Activated T-helper 1 cell treated with anti-CD3 and anti-CD28 coated beads, Interleukin-12 subunit alpha, Interleukin-12 subunit beta, Interleukin-2, Interleukin-4 antibody, amounts not matched to agents 30 ng/mL and 10 ng/mL and 1 ng/mL, durations not matched to agents 14 hours and 24 hours and 36 hours (primary cell): ENCODE measurements at regions of chr11 and their contacts with region 1.

Region 1: GRCh38 chr11:2400069-2400760 is at the start of gene TSSC4:
- DNase-seq: peak; percentile 99
- H3K4me3 Mint-ChIP-seq: peak within 1 kb of the TSS; percentile 92
- H3K27ac Mint-ChIP-seq: peak within 1 kb of the TSS; percentile 84
- H3K4me1 Mint-ChIP-seq: no peaks in the 10 kb centered on the region
- H3K27me3 Mint-ChIP-seq: no peaks in the 10 kb centered on the region
- total RNA-seq, gene TSSC4: 70.8 and 76.4 TPM in 2 replicates

Region 2: DNA sequence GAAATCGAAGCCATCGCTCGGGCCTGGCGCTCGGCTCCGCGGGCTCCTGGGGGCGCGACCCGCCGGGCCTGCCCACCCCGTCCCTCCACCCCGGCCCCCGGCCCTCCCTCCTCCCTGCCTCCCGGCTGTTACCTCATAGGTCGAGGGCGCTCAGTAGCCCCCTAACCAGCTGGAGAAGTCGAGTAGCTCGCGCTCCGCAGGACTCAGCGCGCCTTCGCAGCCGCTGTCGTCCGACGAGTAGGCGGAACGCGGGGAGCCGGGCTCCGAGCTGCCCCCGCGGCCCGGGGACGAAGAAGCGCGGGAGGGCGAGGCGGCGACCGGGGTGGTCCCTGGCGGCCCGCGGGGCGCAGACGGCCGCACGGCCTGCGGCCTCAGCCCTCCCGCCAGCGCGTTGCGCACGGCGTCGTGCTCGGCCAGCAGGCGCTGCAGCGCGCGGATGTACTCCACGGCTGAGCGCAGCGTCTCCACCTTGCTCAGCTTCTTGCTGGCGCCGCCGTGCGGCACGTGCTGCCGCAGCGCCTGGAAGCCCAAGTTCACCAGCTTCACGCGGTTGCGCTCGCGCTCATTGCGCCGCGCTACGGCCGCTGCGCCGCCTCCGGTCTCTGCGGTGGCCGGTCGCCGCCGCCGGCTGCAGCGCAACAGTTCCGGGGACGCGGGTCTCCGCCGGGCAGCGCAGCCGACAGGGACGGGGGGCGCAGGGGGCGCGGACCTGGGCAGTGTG is 130.5 kb before region 1 on chr11:
- intact Hi-C with region 1: loop called (anchors 1 kb)
- DNase-seq: peak; percentile 25
- H3K4me3 Mint-ChIP-seq: no peak overlapping the region
- H3K27ac Mint-ChIP-seq: no peak overlapping the region
- H3K4me1 Mint-ChIP-seq: peaks cover 16% of the 10 kb centered on the region
- H3K27me3 Mint-ChIP-seq: peaks cover 32% of the 10 kb centered on the region

Region 3: DNA sequence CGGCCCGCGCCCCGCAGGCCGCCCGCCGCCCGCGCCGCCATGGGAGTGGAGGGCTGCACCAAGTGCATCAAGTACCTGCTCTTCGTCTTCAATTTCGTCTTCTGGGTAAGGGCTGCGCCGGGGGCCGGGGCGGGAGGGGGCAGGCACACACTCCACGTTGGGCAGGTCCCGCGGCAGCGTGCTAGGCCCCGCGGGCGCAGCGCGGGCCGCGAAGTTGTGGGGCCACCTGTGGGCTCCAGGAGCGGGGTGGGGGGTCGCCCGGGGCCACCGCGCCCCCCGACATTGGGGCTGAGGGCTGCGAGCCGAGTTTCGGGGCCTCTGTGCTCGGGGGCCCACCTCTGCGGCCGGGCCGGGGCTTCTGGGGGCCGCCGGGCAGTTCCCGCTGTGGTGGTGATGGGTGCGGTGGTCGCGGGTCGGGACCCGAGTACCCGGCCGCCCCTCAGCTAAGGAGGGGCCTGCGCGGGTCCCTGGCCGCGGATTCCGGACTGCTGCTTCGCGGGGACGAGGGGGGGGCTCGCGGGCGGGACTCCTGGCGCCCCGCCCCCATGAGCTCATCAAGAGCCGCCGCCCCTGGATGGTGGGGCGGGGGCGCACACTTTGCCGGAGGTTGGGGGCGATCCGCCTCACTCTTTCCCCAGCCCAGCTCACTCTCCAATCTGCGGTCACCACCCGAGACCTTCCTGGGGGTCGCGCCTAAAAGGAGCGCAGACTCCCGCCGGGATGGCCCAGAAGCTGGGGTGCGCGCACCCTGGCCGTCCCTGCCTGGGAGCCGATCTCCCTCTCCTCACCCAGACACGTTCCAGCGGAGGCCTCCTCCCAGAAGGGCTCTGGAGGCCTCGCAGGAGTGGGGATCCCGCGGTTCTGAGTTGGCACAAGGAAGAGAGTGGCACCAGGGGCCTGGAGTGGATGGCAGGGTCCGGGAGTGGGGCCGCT is 22.4 kb before region 1 on chr11:
- intact Hi-C with region 1: loop called (anchors 1 kb)
- DNase-seq: peak; percentile 44
- H3K4me3 Mint-ChIP-seq: peak overlapping the region; percentile 90
- H3K27ac Mint-ChIP-seq: peak overlapping the region; percentile 87
- H3K4me1 Mint-ChIP-seq: peaks cover 10% of the 10 kb centered on the region
- H3K27me3 Mint-ChIP-seq: peaks cover 4% of the 10 kb centered on the region

Region 4: GRCh38 chr11:2444821-2445745 is 44.9 kb after region 1 on chr11 and contains the start of gene KCNQ1:
- intact Hi-C with region 1: loop called (anchors 1 kb)
- DNase-seq: peak; percentile 49
- H3K4me3 Mint-ChIP-seq: peak within 1 kb of the TSS; percentile 88
- H3K27ac Mint-ChIP-seq: peak within 1 kb of the TSS; percentile 65
- H3K4me1 Mint-ChIP-seq: peaks cover 27% of the 10 kb centered on the region
- H3K27me3 Mint-ChIP-seq: peaks cover 14% of the 10 kb centered on the region
- total RNA-seq, gene KCNQ1: 5.3 and 6.4 TPM in 2 replicates

Region 5: DNA sequence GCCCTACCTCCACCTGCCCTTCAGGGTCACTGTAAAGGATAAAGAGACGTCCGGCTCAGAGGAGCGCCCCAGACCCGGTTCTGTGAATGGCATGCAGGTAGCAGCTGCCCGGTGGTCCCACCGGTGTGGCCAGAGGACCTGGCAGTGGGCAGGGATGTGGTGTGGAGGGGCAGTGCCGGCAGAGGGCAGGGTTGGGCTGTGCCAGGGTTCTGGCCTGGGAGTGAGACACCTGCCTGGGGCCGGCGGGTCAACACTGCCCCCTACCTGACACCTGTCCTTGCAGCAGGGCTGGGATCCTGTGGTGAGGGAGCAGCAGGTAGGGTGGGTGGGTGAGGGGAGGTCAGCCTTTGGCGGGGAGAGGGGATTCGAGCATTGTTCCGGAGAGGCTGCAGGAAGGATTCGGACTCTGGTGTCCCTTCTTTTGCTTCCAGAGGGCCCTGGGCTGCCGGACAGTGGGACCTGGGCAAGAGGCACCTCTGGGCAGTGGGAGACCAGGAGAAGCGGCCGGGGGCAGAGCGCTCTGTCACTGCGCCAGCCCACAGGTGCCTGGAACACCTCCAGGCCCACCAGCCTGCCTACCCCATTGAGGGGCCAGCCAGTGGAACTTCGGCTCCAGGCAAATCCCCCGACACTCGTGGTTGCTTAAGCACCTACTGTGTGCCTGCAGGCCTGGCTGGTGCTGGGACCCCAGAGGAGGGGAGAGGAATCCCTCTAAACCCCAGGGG is 530.7 kb after region 1 on chr11:
- intact Hi-C with region 1: loop called (anchors 1 kb)
- DNase-seq: no peak
- H3K4me3 Mint-ChIP-seq: peak overlapping the region; percentile 78
- H3K27ac Mint-ChIP-seq: peak overlapping the region; percentile 77
- H3K4me1 Mint-ChIP-seq: peaks cover 15% of the 10 kb centered on the region
- H3K27me3 Mint-ChIP-seq: peaks cover 12% of the 10 kb centered on the region